Vagina (tissue), 2 donors: ENCODE measurements at regions of chr12 and their contacts with region 1.

Region 1: DNA sequence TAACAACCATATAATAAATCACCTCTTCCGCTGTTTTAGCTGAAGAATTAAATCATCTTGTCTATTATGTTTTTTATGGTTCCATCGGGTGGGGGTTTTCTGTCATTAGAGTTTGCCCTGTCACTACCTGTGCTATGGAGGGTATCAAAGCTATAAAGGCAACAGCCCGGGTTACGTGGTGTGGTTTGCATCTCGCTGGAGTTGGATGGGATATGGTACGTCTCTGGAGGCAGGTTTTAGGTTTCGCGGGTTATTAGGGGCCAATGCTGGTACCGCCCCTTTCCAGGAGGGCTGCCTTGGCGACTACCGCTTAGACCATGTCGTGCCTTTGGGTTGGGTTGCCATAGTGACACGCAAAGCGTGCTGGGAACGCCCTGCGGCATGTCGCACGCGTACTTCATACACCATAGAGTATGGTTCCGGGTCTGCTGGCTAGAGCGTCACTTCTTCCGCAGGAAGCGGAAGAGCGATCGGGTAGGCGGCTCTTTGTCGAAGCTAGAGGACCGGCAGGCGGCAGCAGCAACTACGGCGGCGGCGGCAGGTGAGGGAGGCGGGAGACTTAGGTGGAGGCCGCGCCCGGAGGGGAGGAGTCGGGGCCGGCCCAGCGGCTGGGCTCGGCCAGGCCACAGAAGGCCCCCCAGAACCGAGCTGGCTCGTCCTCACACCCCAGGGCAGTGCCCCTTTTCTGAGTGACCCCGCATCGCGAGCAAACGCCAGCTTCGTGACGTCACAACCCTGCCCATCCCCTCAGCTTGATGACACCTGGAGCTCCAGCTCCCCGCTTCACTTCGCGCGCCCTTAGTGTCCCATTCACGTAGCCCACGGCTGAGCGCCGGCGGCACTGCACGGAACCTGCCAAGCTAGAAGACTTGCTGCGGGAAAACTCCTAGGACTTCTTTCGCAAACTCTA is at the start of gene ZC3H10:
- DNase-seq: peak; percentile 99 to 100
- H3K4me3 ChIP-seq: peak within 1 kb of the TSS; percentile 66 to 71
- H3K27ac ChIP-seq: peak within 1 kb of the TSS; percentile 95
- H3K4me1 ChIP-seq: peaks cover 15% of the 10 kb centered on the region
- H3K27me3 ChIP-seq: no peaks in the 10 kb centered on the region
- CTCF ChIP-seq: peak; percentile 15 to 36 (median 25)
- POLR2A ChIP-seq: peak in 1 of 2 donors; percentile 95
- total RNA-seq, gene ZC3H10: 2.0 TPM

Region 2: GRCh38 chr12:55996715-55997534 is 121.1 kb before region 1 on chr12 and contains the start of gene SUOX:
- intact Hi-C with region 1: no loop called
- DNase-seq: peak in 1 of 2 donors; percentile 99
- H3K4me3 ChIP-seq: peak within 1 kb of the TSS; percentile 65 to 68
- H3K27ac ChIP-seq: peak within 1 kb of the TSS; percentile 76
- H3K4me1 ChIP-seq: peaks cover 16% of the 10 kb centered on the region
- H3K27me3 ChIP-seq: no peaks in the 10 kb centered on the region
- CTCF ChIP-seq: no peak
- POLR2A ChIP-seq: no peak
- total RNA-seq, gene SUOX: 15.5 TPM

Region 3: DNA sequence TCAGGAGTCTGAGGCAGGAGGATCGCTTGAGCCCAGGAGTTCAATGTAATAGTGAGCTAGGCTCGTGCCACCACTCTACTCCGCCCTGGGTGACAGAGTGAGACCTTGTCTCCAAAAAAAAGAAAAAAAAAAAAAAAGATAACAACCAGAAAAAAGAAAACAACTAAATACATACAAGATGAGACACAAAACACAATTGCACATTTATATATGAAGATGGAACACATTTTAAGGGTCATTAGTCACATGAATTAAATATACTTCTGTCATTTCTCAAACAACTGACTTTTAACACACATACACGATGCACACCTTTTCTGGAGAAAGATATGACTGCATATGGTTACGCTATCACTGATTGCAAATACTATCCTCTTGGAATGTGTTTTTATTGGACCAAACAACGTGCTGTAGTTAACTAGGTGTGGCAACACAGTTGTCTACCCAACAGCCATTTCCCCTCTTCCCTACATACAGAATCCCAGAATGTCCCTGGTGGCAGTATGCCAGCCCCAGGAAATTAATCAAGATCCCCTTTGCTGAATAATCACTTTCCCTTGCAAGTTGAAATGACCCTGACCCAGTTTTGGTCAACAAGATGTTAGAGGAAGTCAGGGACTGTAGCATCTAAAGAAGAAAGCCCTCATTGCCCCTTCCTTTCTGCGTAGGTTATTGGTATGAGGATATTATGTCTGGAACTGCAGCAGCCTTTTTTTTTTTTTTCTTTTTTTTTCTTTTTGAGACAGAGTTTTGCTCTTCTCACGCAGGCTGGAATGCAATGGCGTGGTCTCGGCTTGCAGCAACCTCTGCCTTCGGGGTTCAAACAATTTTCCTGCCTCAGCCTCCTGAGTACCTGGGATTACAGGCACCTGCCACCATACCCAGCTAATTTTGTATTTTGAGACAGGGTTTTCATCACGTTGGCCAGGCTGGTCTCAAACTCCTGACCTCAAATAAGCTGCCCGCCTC is 28.7 kb after region 1 on chr12:
- intact Hi-C with region 1: no loop called
- DNase-seq: no peak
- H3K4me3 ChIP-seq: no peak overlapping the region
- H3K27ac ChIP-seq: no peak overlapping the region
- H3K4me1 ChIP-seq: peaks cover 28% of the 10 kb centered on the region
- H3K27me3 ChIP-seq: no peaks in the 10 kb centered on the region
- CTCF ChIP-seq: no peak
- POLR2A ChIP-seq: no peak

Region 4: DNA sequence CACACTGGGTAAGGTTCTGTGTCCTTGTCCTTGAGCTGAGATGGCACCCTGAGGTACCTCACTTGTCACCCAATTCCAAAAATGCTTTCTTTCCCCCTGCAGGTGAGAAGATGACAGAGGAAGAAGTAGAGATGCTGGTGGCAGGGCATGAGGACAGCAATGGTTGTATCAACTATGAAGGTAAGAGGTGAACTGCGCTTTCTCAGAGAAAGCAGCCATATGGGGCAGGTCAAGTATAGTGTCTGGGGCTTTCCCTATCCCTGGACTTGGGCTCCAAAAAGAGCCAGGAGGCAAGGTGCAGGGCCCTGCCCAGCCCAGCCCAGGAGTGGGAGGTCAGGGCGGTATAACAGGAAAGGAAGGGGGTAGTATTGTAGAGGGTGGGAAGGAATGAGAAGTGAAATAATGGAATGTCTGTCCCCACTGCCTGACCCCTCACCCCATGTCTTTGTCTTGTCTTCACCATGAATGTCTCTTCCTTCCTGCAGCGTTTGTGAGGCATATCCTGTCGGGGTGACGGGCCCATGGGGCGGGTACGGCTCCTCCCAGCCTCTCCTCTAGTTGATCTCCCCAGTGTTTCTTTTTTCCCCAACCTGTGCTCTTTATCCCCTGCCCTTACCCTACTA is 42.2 kb after region 1 on chr12:
- intact Hi-C with region 1: loop called (anchors 5 kb)
- DNase-seq: no peak
- H3K4me3 ChIP-seq: peak overlapping the region; percentile 93 to 97
- H3K27ac ChIP-seq: peak overlapping the region; percentile 99
- H3K4me1 ChIP-seq: peaks cover 35% of the 10 kb centered on the region
- H3K27me3 ChIP-seq: no peaks in the 10 kb centered on the region
- CTCF ChIP-seq: no peak
- POLR2A ChIP-seq: no peak

Region 5: GRCh38 chr12:56189176-56189917 is 71.3 kb after region 1 on chr12 and contains the start of gene SMARCC2:
- intact Hi-C with region 1: loop called (anchors 2 kb)
- DNase-seq: peak in 1 of 2 donors; percentile 93
- H3K4me3 ChIP-seq: peak within 1 kb of the TSS; percentile 80 to 93
- H3K27ac ChIP-seq: peak within 1 kb of the TSS; percentile 94
- H3K4me1 ChIP-seq: peaks cover 28% of the 10 kb centered on the region
- H3K27me3 ChIP-seq: no peaks in the 10 kb centered on the region
- CTCF ChIP-seq: peak in 2 of 3 experiments; percentile 5 to 58
- POLR2A ChIP-seq: no peak
- total RNA-seq, gene SMARCC2: 95.3 TPM